Activated T-helper 2 cell treated with anti-CD3 and anti-CD28 coated beads, Interferon-gamma antibody, Interleukin-2, Interleukin-4, amounts not matched to agents 10 μg/mL and 5 μg/mL and 100 μg/mL, durations not matched to agents 14 hours and 24 hours and 36 hours (primary cell): ENCODE measurements at regions of chr14 and their contacts with region 1.

Region 1: DNA sequence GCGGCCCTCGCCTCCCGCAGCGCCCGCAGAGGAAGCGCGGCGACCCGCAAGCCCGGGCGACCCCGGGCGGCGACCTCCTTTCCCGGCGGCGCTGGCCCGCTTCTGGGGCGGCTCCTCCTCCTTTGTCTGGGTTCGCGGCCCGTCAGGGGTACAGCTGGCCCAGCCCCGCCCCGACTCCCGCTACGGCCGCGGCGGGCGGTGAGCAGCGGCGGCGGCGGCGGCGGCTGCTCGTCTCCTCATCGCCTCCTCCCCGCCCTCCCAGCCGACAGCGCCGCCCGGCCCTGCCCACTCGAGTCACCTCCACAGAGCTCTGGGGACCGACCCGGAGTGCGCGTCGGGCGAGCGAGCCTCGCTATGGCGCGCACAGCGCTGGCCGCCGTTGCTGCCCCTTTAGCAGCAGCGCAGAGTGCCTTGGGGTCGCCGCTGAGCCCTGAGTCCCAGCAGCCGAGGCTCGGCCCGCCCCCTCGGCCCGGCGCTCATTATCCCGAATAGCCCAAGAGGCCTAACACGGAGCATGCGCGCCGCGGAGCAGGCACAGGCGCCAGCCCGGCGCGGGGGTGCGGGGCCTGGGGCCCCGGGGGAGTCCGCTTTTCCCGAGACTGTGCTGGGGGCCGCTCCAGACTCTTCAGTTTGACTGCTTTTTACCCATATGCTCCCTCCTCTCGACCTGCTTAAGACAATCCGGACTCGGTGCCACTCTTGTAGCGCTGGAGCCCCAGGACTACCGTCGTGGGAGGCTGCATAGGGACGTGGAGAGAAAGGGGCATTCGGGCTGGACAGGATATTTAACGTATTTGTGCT is at the start of gene SOS2:
- DNase-seq: peak; percentile 80
- H3K4me3 Mint-ChIP-seq: peak within 1 kb of the TSS; percentile 92
- H3K27ac Mint-ChIP-seq: peak within 1 kb of the TSS; percentile 88
- H3K4me1 Mint-ChIP-seq: peaks cover 36% of the 10 kb centered on the region
- H3K27me3 Mint-ChIP-seq: peaks cover 4% of the 10 kb centered on the region
- total RNA-seq, gene SOS2: 17.0 and 20.7 TPM in 2 replicates

Region 2: GRCh38 chr14:49585803-49586672 is 645.6 kb before region 1 on chr14 and contains the start of gene RPS29:
- intact Hi-C with region 1: loop called (anchors 5 kb)
- DNase-seq: peak; percentile 99
- H3K4me3 Mint-ChIP-seq: peak within 1 kb of the TSS; percentile 92
- H3K27ac Mint-ChIP-seq: peak within 1 kb of the TSS; percentile 98
- H3K4me1 Mint-ChIP-seq: peaks cover 33% of the 10 kb centered on the region
- H3K27me3 Mint-ChIP-seq: no peaks in the 10 kb centered on the region
- total RNA-seq, gene RPS29: 1,969 and 2,120 TPM in 2 replicates

Region 3: GRCh38 chr14:49620182-49621113 is 611.2 kb before region 1 on chr14 and contains the starts of genes MGAT2 and RPL36AL:
- intact Hi-C with region 1: loop called (anchors 5 kb)
- DNase-seq: peak; percentile 96
- H3K4me3 Mint-ChIP-seq: peak within 1 kb of the TSS; percentile 91
- H3K27ac Mint-ChIP-seq: peak within 1 kb of the TSS; percentile 94
- H3K4me1 Mint-ChIP-seq: peaks cover 44% of the 10 kb centered on the region
- H3K27me3 Mint-ChIP-seq: no peaks in the 10 kb centered on the region
- total RNA-seq, gene MGAT2: 57.0 and 57.9 TPM in 2 replicates
- total RNA-seq, gene RPL36AL: 278 and 292 TPM in 2 replicates

Region 4: DNA sequence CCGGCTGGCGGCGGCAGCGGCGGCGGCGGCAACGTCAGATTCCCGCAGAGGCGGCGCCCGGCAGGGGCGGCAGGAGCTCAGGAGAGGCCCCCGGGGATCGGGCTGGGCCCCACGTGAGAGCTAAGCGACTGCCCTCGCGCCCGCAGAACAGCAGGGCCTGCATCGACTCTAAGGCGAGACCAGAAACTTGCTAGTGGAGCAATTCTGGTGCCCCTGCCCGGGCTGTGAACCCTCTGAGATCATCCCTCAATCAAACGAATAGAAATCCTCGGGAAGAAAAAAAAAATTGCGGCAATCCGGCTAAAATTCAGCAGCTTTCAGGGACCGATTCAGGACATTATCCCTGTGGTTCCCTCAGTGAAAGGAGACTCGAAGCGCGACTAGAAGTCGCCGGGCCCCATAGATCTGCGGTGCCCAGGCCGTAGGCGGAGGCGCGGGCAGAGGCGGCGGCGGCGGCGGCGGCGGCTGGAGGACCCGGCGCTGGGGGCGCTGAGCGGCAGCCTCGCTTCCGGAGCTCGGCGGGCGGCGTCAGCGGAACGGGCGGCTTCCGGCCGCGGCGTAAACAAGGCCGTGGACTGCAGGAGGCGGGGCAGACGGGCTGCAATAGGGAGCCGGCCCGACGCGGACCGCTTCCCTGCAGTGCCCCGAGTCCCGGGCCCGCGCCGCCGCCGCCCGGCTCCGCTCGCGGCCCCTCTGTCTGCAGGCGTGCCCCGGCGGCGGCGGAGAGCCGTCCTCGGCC is 463.9 kb before region 1 on chr14 and contains the start of gene KLHDC2:
- intact Hi-C with region 1: loop called (anchors 5 kb)
- DNase-seq: peak; percentile 89
- H3K4me3 Mint-ChIP-seq: peak within 1 kb of the TSS; percentile 96
- H3K27ac Mint-ChIP-seq: peak within 1 kb of the TSS; percentile 100
- H3K4me1 Mint-ChIP-seq: peaks cover 31% of the 10 kb centered on the region
- H3K27me3 Mint-ChIP-seq: no peaks in the 10 kb centered on the region
- total RNA-seq, gene KLHDC2: 28.9 and 31.6 TPM in 2 replicates

Region 5: GRCh38 chr14:49862089-49862673 is 369.5 kb before region 1 on chr14:
- intact Hi-C with region 1: loop called (anchors 5 kb)
- DNase-seq: peak; percentile 83
- H3K4me3 Mint-ChIP-seq: no peak overlapping the region
- H3K27ac Mint-ChIP-seq: no peak overlapping the region
- H3K4me1 Mint-ChIP-seq: peaks cover 16% of the 10 kb centered on the region
- H3K27me3 Mint-ChIP-seq: no peaks in the 10 kb centered on the region

Region 6: GRCh38 chr14:50116181-50116956 is 115.3 kb before region 1 on chr14 and contains the start of gene VCPKMT:
- intact Hi-C with region 1: loop called (anchors 1 kb)
- DNase-seq: peak; percentile 94
- H3K4me3 Mint-ChIP-seq: peak within 1 kb of the TSS; percentile 97
- H3K27ac Mint-ChIP-seq: peak within 1 kb of the TSS; percentile 98
- H3K4me1 Mint-ChIP-seq: peaks cover 17% of the 10 kb centered on the region
- H3K27me3 Mint-ChIP-seq: no peaks in the 10 kb centered on the region
- total RNA-seq, gene VCPKMT: 9.7 and 10.1 TPM in 2 replicates

Region 7: GRCh38 chr14:50726372-50727107 is 494.9 kb after region 1 on chr14:
- intact Hi-C with region 1: loop called (anchors 5 kb)
- DNase-seq: peak; percentile 24
- H3K4me3 Mint-ChIP-seq: peak overlapping the region; percentile 55
- H3K27ac Mint-ChIP-seq: peak overlapping the region; percentile 92
- H3K4me1 Mint-ChIP-seq: peaks cover 32% of the 10 kb centered on the region
- H3K27me3 Mint-ChIP-seq: no peaks in the 10 kb centered on the region